ENCODE measurements at regions of chr1 and their contacts with region 1.

Region 1: DNA sequence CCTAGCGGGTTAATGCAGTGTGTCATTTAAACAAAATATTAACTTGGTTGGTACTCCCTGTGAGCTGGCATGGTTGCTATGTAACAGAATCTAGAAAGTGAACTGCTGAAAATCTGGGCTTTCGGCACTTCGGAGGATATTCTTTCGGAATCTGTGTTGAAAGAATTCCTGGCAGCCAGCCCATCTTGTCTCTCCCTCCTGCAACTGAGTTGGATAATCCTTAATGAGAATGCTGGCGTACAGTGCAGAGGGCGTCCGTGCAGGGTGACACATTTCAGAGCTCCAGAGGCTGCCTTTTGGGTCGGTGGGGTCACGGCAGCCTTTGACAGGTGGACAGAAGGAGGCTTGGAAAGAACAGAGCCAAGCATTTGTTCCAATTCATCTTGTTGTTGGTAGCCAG is 3.7 kb downstream of the KAZN start:
- DNase-seq: peak; percentile 94
- H3K4me3 ChIP-seq: peak overlapping the region in 1 of 4 donors; percentile 30
- H3K27ac ChIP-seq: peak overlapping the region in 1 of 4 donors; percentile 10
- H3K4me1 ChIP-seq: peaks cover 5 to 35% (median 33%) of the 10 kb centered on the region in 4 donors
- H3K27me3 ChIP-seq: peaks cover 8 to 65% (median 21%) of the 10 kb centered on the region in 4 donors
- CTCF ChIP-seq: no peak
- EP300 ChIP-seq: no peak
- POLR2A ChIP-seq: no peak

Region 2: GRCh38 chr1:14626869-14627607 is 24.9 kb after region 1 on chr1:
- intact Hi-C with region 1: no loop called
- DNase-seq: no peak
- H3K4me3 ChIP-seq: no peak overlapping the region
- H3K27ac ChIP-seq: peak overlapping the region in 2 of 4 donors; percentile 22 to 41
- H3K4me1 ChIP-seq: peaks cover 0 to 23% (median 16%) of the 10 kb centered on the region in 4 donors
- H3K27me3 ChIP-seq: no peaks in the 10 kb centered on the region
- CTCF ChIP-seq: no peak
- EP300 ChIP-seq: no peak
- POLR2A ChIP-seq: no peak

Region 3: GRCh38 chr1:15028102-15028501 is 426.0 kb after region 1 on chr1:
- intact Hi-C with region 1: loop called (anchors 5 kb)
- DNase-seq: no peak
- H3K4me3 ChIP-seq: no peak overlapping the region
- H3K27ac ChIP-seq: no peak overlapping the region
- H3K4me1 ChIP-seq: peaks cover 0 to 9% (median 5%) of the 10 kb centered on the region in 4 donors
- H3K27me3 ChIP-seq: no peaks in the 10 kb centered on the region
- CTCF ChIP-seq: no peak
- EP300 ChIP-seq: no peak
- POLR2A ChIP-seq: no peak